ENCODE measurements at regions of chr4 and their contacts with region 1.

Region 1: DNA sequence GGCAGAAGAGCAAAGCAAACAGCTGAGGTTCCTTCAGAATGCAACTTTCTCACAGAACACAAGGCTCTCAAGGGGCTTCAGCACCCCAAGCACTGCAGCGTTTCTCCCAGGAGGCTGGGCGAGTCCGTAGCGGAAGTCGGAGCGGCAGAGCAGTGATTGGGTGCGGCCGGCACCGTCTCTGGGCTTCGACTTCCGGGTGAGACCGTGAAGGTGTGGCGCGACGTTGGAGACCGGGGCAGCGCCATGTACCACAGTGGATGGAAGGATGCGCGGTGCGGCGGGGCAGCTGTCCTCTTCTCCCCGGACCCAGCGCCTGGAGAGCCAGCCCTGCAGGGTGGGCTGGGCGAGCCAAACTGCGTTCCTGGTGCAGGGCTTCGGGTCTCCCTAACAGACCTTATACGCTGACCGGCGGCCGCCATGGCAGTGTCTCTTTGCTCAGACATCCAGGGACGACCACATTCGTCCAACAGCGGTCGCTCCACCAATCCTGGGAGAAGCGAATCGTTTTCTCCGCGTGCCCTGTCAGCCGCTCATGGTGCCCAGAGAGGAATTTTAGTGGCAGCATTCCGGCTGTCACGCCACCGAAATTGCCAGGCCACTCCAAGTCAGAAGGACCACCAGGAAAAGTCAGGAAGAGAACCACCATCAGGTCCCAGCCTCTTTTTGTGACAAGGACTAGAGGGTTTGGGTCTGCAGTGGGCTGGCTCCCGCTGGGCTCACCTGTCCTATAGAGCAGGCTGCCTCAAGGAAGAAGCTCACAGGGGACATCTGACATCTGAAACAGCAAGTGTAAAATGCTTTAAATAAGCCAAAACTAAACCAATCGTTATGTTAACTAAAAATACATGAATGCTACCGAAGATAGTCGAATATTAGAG is 20.5 kb downstream of the TRIM61 start:
- DNase-seq: peak; percentile 89
- H3K4me3 Mint-ChIP-seq: peak overlapping the region; percentile 90
- H3K27ac Mint-ChIP-seq: peak overlapping the region; percentile 37
- H3K4me1 Mint-ChIP-seq: peaks cover 14% of the 10 kb centered on the region
- H3K27me3 Mint-ChIP-seq: peaks cover 3% of the 10 kb centered on the region

Region 2: DNA sequence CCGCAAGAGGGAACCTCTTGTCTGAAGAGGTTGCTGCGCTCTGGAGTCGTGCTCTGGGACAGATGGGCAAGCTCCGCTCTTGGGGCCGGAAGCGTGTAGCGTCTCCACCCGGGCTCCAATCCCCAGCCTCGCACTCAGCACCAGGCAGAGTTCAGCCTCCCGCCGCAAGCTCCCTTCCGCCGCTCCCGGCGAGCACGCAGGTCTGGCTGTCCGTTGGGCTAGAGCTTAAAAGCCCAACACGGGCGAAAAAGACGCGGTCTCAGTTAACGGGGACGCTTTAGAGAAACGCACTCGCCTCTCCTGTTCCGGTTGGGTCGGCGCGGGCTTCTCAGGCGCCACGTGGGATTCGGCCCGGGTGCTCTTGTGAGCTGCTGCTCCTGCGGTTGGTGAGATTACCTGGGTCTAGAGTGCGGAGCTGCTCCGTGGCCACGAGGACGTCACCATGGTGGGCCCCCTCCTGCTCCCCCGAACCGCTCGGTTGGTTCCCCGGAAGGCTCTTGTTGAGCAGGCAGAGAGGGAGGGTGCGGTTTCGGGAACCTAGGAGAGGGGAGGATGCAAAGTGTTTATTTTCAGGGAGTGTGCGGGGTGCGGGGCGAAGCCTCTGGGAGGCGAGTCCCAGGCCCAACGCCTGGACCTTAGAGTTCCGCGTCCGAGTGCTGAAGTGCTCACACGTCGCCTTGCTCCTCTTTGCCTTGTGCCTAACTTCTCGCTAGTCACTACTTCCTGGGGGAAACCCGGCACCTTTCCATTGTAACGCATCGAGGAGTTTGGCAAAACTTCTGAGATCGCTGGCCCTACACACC is 1462.4 kb before region 1 on chr4 and contains the start of gene TMA16:
- CTCF ChIA-PET with region 1: no interaction called
- intact Hi-C with region 1: loop called (anchors 10 kb)
- DNase-seq: peak; percentile 88
- H3K4me3 Mint-ChIP-seq: peak within 1 kb of the TSS; percentile 83
- H3K27ac Mint-ChIP-seq: peak within 1 kb of the TSS; percentile 99
- H3K4me1 Mint-ChIP-seq: peaks cover 26% of the 10 kb centered on the region
- H3K27me3 Mint-ChIP-seq: no peaks in the 10 kb centered on the region
- total RNA-seq, gene TMA16: 45.1 to 46.7 TPM

Region 3: DNA sequence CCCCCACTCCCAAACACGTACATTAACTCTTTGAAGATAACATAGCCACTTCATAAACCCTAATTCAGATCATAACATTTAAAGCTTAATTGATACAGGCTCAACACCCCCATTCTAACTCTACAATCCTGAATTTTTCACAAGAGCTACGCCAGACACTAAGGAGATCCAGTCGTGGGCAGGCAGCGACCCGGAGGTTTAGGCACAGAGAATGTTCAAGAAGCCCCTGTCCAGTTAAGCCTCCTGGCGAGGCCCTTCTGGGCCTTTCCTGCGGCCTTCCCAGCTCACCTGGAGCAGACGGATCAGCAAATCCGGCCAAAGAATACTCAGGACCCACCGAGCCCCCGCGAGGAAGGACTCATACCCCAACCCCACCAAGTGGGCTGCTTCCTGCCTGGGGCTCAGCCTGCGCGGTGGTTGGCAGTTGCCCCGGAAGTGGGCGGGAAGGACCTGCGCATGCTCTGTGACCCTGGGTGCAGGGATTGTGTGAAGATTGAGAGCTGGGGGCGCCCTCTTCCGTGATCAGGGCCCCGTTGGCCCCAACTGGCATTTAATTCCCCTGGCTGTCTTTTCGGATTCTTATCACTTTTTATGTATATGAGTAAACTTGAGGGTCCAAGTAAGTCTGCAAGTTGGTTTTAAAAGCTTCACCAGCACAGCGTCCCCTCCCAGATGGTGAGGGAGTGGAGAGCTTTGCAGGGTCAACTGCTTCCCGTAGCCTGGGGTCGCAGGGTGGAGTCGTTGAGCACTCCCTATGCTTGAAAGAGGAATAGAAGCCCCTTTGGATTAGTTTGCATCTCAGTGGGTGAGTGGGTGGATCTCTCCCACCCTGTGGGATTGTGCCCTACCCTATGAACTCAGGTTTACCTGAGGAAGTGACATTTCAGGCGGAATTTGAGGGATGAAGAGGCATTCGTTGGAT is 20.5 kb after region 1 on chr4 and contains the start of gene TRIM61:
- CTCF ChIA-PET with region 1: interaction called, 5 read pairs
- intact Hi-C with region 1: loop called (anchors 1 kb)
- DNase-seq: peak; percentile 73
- H3K4me3 Mint-ChIP-seq: peak within 1 kb of the TSS; percentile 82
- H3K27ac Mint-ChIP-seq: peak within 1 kb of the TSS; percentile 76
- H3K4me1 Mint-ChIP-seq: peaks cover 9% of the 10 kb centered on the region
- H3K27me3 Mint-ChIP-seq: peaks cover 2% of the 10 kb centered on the region
- total RNA-seq, gene TRIM61: 0.67 to 0.84 TPM

Region 4: DNA sequence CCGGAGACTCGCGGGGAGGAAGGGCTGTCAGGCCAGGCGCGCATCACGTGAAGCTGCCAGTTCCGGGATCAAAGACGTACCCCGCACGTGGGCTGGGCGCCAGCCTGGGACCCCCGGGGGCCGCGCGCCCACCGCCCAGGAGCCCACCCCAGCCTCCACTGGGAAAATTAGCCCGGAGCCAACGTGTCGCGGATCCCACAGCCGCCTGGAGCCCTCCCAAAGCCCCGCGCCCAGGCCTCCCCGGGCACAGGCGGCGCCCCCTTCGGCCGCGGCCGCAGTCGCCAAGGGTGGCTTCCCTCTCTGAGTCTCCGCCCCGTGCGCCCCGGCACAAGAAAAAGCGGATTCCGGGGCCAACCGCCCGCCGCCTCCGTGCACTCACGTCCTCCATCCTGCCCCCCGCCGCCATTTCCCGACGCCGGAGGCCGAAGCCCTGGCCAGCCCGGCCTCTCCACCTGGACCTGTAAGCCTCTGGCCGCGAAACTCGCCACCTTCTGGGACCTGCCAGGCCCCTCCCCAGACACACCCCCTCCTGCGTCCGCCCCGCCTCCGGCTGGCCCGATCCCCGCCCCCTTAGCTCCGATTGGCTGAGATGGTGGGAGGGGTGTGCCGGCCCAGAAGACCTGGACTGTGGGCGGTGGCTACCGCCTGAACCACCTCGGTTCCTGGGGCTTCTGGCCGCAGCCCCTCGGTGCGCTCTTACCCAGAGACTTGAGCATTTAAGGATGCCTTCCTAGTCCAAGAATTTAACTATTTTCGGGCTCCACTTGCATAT is 155.5 kb after region 1 on chr4 and contains the start of gene TMEM192:
- CTCF ChIA-PET with region 1: no interaction called
- intact Hi-C with region 1: loop called (anchors 2 kb)
- DNase-seq: peak; percentile 93
- H3K4me3 Mint-ChIP-seq: peak within 1 kb of the TSS; percentile 94
- H3K27ac Mint-ChIP-seq: peak within 1 kb of the TSS; percentile 74
- H3K4me1 Mint-ChIP-seq: peaks cover 13% of the 10 kb centered on the region
- H3K27me3 Mint-ChIP-seq: no peaks in the 10 kb centered on the region
- total RNA-seq, gene TMEM192: 6.3 to 8.9 TPM

Measured in activated naive CD4-positive, alpha-beta T cell treated with anti-CD3 and anti-CD28 coated beads for 36 hours (primary cell).